ENCODE measurements at regions of chr14 and their contacts with region 1.

Region 1: DNA sequence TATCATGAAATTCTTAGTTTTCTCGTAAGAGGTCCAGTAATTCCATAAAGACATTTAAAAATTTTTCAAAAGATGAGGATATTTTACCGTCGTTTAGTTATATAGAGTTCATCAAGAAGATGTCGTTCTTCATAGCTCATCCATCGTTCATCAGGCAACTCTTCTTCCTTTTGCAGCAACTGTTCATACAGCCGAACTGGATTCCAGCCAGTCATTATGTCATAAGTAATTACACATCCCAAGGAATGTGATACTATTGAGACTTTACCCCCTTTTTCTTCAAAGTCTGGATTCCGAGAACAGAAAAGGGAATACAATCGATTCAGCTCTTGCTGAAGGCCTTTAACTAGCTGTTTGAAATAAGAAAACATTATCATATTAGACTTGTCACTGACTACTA is 90.3 kb downstream of the DDHD1 start:
- DNase-seq: no peak
- H3K4me3 ChIP-seq: no peak overlapping the region
- H3K27ac ChIP-seq: no peak overlapping the region
- H3K4me1 ChIP-seq: no peaks in the 10 kb centered on the region
- H3K27me3 ChIP-seq: no peaks in the 10 kb centered on the region
- CTCF ChIP-seq: no peak

Region 2: GRCh38 chr14:52936437-52936836 is 126.4 kb before region 1 on chr14:
- CTCF ChIA-PET with region 1: no interaction called
- POLR2A ChIA-PET with region 1: no interaction called
- intact Hi-C with region 1: no loop called
- DNase-seq: no peak
- H3K4me3 ChIP-seq: no peak overlapping the region
- H3K27ac ChIP-seq: no peak overlapping the region
- H3K4me1 ChIP-seq: no peaks in the 10 kb centered on the region
- H3K27me3 ChIP-seq: no peaks in the 10 kb centered on the region
- CTCF ChIP-seq: no peak

Region 3: GRCh38 chr14:53152890-53153701 is 90.2 kb after region 1 on chr14 and contains the start of gene DDHD1:
- CTCF ChIA-PET with region 1: no interaction called
- POLR2A ChIA-PET with region 1: no interaction called
- intact Hi-C with region 1: loop called (anchors 5 kb)
- DNase-seq: peak in 1 of 2 experiments; percentile 77
- H3K4me3 ChIP-seq: peak within 1 kb of the TSS; percentile 96
- H3K27ac ChIP-seq: no peak within 1 kb of the TSS
- H3K4me1 ChIP-seq: peaks cover 14% of the 10 kb centered on the region
- H3K27me3 ChIP-seq: no peaks in the 10 kb centered on the region
- CTCF ChIP-seq: no peak
- total RNA-seq, gene DDHD1: 11.1 and 11.3 TPM in 2 replicates